GM12878 (cell line): ENCODE measurements at regions of chr20 and their contacts with region 1.

Region 1: GRCh38 chr20:19934792-19935491 is 82.2 kb upstream of the NAA20 start:
- DNase-seq: no peak
- ATAC-seq: peak; percentile 72
- H3K4me3 ChIP-seq: 0 out of 2 replicates have a peak overlapping the region, but pooled peaks have one; percentile 5
- H3K27ac ChIP-seq: no peak overlapping the region
- H3K4me1 ChIP-seq: peaks cover 23% of the 10 kb centered on the region
- H3K27me3 ChIP-seq: no peaks in the 10 kb centered on the region
- CTCF ChIP-seq: no peak
- EP300 ChIP-seq: peak in 1 of 2 experiments; percentile 55; a peak in 1 of 4 replicates
- POLR2A ChIP-seq: no peak
- RAD21 ChIP-seq: no peak

Region 2: DNA sequence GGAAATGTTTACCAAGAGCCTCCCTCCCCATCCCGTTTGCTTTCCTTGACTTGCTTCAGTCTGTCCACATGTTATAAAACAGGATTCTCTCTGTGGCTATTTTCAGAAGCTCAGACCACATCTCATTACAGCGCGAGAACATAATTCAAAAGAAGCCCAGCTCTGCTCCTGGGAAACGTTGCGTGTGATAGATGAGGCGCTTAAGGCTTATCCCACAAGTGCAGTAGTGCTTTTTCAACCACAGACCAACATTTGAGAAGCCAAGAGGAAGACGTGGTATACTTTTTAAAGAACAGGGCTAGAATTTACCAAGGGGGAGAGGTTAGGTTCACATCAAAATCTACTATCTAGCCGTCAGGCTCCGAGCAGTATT is 483.0 kb before region 1 on chr20:
- CTCF ChIA-PET with region 1: no interaction called
- POLR2A ChIA-PET with region 1: no interaction called
- RAD21 ChIA-PET with region 1: no interaction called
- SMC1A ChIA-PET with region 1: no interaction called
- in situ Hi-C with region 1: no loop called
- intact Hi-C with region 1: no loop called
- DNase-seq: no peak
- ATAC-seq: no peak
- H3K4me3 ChIP-seq: no peak overlapping the region
- H3K27ac ChIP-seq: no peak overlapping the region
- H3K4me1 ChIP-seq: no peaks in the 10 kb centered on the region
- H3K27me3 ChIP-seq: no peaks in the 10 kb centered on the region; a peak in 1 of 4 replicates
- CTCF ChIP-seq: no peak
- EP300 ChIP-seq: no peak
- POLR2A ChIP-seq: no peak
- RAD21 ChIP-seq: no peak

Region 3: DNA sequence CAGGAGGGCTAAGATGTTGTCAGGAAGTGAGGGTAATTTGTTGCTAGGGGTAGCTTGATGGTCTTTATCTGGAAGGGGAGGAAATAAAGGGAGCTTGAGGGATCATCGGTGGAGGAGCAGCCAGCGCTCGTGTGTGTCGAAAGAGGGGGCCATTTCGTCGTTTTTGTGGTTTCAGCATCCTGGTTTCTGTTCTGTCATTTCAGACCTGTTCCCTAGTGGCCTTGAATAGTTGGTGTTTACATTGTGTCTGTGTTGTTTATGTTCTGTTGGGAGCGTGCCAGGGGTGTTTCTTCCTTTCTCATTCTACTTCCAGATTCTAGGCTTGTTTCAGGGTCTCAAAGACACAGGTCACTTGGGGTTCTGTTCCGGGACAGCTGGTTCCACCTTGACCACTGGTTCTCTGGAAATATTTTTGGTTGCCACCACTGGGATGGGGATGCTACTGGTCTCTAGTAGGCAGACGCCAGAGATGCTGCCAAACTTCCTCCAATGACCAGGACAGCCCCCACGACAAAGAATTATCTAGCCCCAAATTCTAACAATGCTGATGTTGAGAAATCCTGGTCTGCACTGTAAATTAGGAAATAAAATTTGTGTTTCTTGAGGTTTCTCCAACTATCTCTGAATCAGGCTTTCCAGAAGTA is 31.7 kb before region 1 on chr20:
- CTCF ChIA-PET with region 1: interaction called, 12 read pairs
- POLR2A ChIA-PET with region 1: no interaction called
- RAD21 ChIA-PET with region 1: interaction called, 3 read pairs
- SMC1A ChIA-PET with region 1: interaction called, 11 read pairs
- in situ Hi-C with region 1: no loop called
- intact Hi-C with region 1: no loop called
- DNase-seq: no peak
- ATAC-seq: peak; percentile 94
- H3K4me3 ChIP-seq: no peak overlapping the region
- H3K27ac ChIP-seq: no peak overlapping the region
- H3K4me1 ChIP-seq: no peaks in the 10 kb centered on the region
- H3K27me3 ChIP-seq: no peaks in the 10 kb centered on the region
- CTCF ChIP-seq: peak; percentile 42 to 85 (median 59); a peak in 5 of 6 replicates
- EP300 ChIP-seq: no peak; a peak in 1 of 4 replicates
- POLR2A ChIP-seq: no peak
- RAD21 ChIP-seq: peak; percentile 84

Region 4: GRCh38 chr20:19909725-19910124 is 25.2 kb before region 1 on chr20:
- CTCF ChIA-PET with region 1: interaction called, 27 read pairs
- POLR2A ChIA-PET with region 1: interaction called, 4 read pairs
- RAD21 ChIA-PET with region 1: interaction called, 51 read pairs
- SMC1A ChIA-PET with region 1: interaction called, 139 read pairs
- in situ Hi-C with region 1: no loop called
- intact Hi-C with region 1: no loop called
- DNase-seq: no peak
- ATAC-seq: no peak
- H3K4me3 ChIP-seq: no peak overlapping the region
- H3K27ac ChIP-seq: no peak overlapping the region
- H3K4me1 ChIP-seq: peaks cover 37% of the 10 kb centered on the region
- H3K27me3 ChIP-seq: no peaks in the 10 kb centered on the region
- CTCF ChIP-seq: no peak
- EP300 ChIP-seq: no peak
- POLR2A ChIP-seq: no peak
- RAD21 ChIP-seq: no peak

Region 5: DNA sequence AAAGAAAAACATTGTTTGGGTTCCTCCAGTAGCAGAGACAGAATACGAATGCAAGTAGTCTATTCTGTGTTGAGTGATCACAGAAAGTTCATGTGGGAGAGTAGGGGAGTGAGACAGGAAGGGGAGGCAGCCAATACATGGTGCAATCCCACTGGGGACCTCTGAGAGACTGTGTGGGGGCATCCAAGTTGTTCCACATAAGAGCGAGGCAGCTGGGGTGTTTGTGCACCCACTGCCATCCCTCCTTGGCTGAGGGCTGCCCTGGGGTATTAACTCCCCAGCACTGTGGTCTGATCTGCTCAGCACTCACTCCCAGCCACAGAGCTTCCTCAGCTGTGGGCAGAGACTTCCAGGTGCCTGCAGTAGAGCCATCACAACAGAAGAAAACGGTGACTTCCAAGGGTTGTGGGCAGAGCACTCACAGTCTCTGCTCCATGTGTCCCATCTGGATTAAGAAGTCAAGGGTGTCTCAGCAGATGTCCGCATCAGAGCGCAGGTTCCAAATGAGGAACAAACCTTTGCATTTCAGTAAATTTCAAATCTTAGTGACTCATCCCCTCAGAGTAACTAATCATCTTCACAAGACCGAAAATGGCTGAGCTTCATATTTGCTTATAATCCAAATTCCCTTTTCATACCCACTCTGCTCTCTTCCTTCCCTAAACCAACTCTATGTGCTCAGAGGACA is 19.7 kb before region 1 on chr20:
- CTCF ChIA-PET with region 1: interaction called, 27 read pairs
- POLR2A ChIA-PET with region 1: interaction called, 11 read pairs
- RAD21 ChIA-PET with region 1: interaction called, 51 read pairs
- SMC1A ChIA-PET with region 1: interaction called, 139 read pairs
- in situ Hi-C with region 1: no loop called
- intact Hi-C with region 1: loop called (anchors 2 kb)
- DNase-seq: no peak
- ATAC-seq: peak; percentile 52
- H3K4me3 ChIP-seq: no peak overlapping the region
- H3K27ac ChIP-seq: peak overlapping the region; percentile 49
- H3K4me1 ChIP-seq: peaks cover 71% of the 10 kb centered on the region
- H3K27me3 ChIP-seq: no peaks in the 10 kb centered on the region
- CTCF ChIP-seq: no peak
- EP300 ChIP-seq: no peak
- POLR2A ChIP-seq: no peak
- RAD21 ChIP-seq: no peak

Region 6: GRCh38 chr20:19947611-19948264 is 12.8 kb after region 1 on chr20:
- CTCF ChIA-PET with region 1: interaction called, 8 read pairs
- POLR2A ChIA-PET with region 1: no interaction called
- RAD21 ChIA-PET with region 1: interaction called, 7 read pairs
- SMC1A ChIA-PET with region 1: interaction called, 44 read pairs
- in situ Hi-C with region 1: no loop called
- intact Hi-C with region 1: no loop called
- DNase-seq: peak; percentile 40
- ATAC-seq: peak; percentile 81
- H3K4me3 ChIP-seq: no peak overlapping the region
- H3K27ac ChIP-seq: no peak overlapping the region
- H3K4me1 ChIP-seq: peaks cover 28% of the 10 kb centered on the region
- H3K27me3 ChIP-seq: 0 out of 4 replicates have a peak, but pooled peaks cover 0 to 2% of the 10 kb centered on the region in 2 experiments
- CTCF ChIP-seq: no peak
- EP300 ChIP-seq: peak; percentile 66 to 86; a peak in 3 of 4 replicates
- POLR2A ChIP-seq: no peak
- RAD21 ChIP-seq: 0 out of 2 replicates have a peak, but pooled peaks have one; percentile 14